ENCODE measurements at regions of chr20 and their contacts with region 1.

Region 1: DNA sequence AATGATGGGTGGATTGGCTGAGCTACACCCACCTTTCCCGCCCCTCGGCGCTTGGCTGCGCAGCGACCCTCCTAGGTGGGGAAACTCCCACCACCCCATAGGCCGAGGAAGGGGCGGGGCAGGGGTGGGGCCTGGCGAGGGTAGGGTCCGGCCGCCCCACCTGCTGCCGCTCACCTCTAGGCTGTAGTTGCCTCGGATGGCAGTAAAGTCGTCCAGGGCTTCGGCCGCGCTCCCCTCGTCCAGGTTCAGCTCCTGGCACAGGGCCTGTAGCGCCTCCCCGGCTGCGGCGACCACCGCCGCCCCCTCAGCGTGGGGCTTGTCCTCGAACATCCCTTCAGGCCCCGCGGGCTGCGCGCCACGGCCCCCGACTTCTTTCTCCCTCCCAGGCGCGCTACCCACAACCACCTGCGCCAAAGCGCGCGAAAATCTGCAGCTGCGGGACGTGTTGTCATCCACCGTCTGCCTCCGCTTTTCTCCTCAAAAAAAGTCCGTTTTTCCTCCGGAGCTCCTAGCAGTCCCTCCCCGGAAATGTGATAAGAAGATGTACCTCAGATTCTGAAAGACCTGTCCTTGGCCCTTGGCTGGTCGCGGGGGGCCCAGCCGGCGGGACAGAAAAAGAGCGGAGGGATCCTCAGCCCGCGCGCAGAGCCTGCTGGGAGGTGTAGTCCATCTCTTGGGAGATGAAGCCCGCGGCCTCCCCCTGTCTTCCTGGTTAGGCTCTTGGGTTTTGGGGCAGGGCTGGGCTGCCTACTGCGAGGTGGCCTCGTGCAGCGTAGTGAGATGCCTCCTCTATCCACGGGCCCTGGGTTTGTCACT is at the start of gene RBL1:
- DNase-seq: peak; percentile 77 to 91 (median 85)
- H3K4me3 ChIP-seq: peak within 1 kb of the TSS; percentile 70 to 100 (median 92)
- H3K27ac ChIP-seq: peak within 1 kb of the TSS in 56 of 59 donors; percentile 1 to 89 (median 70)
- H3K27me3 ChIP-seq: no peaks in the 10 kb centered on the region
- CTCF ChIP-seq: peak; percentile 25 to 83 (median 60)
- total RNA-seq, gene RBL1: 3.8 to 16.4 (median 7.5) TPM

Region 2: GRCh38 chr20:36951198-36951976 is 144.4 kb before region 1 on chr20 and contains the start of gene SAMHD1:
- intact Hi-C with region 1: loop called in 1 of 2 experiments (anchors 10 kb)
- DNase-seq: peak; percentile 95 to 98 (median 96)
- H3K4me3 ChIP-seq: peak within 1 kb of the TSS; percentile 74 to 99 (median 95)
- H3K27ac ChIP-seq: peak within 1 kb of the TSS; percentile 30 to 94 (median 84)
- H3K27me3 ChIP-seq: no peaks in the 10 kb centered on the region
- CTCF ChIP-seq: peak in 42 of 56 donors; percentile 7 to 62 (median 32)
- total RNA-seq, gene SAMHD1: 27.8 to 103 (median 50.8) TPM

Region 3: DNA sequence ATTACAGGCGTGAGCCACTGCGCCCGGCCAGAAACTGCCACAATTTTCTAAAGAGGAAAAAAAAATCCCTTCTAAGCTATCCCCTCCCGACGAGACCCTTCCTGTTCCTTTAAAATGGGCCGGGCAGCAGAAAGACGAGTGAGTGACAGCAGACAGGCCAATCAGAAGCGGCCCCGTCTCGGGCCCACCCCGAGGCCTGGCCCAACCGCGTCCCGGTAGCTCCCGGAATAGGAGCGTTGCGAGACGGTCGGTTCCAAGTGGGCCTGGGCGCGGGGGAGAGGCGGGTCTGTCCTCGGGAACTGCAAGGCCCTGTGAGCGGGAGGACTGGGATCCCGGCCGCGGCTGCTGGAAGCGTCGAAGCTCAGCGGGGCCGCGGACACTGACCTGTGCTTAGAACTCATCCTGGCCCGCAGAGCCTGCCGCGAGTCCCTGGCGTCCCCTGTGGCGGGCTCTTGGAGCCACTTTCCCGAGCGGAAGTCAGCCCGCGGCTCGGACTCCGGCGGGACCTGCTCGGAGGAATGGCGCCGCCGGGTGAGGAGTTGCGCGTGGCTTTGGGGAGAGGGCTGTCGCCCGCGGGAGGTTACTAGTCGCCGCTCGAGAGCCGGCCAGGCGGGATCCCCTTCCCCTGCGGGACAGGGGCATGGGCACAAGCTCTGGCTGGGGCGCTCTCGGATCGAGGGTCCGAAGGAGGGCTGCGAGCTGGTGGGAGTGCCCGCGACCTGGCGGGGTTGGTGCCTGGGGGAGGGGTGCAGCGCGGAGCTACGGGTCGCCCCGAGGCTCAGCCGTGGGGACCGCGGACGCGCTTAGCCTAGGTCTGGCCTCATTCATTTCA is 83.2 kb after region 1 on chr20 and contains the starts of genes MROH8 and RPN2:
- intact Hi-C with region 1: loop called (anchors 1 to 10 kb)
- DNase-seq: peak; percentile 98 to 99 (median 99)
- H3K4me3 ChIP-seq: peak within 1 kb of the TSS; percentile 67 to 97 (median 87)
- H3K27ac ChIP-seq: peak within 1 kb of the TSS; percentile 40 to 100 (median 98)
- H3K27me3 ChIP-seq: no peaks in the 10 kb centered on the region
- CTCF ChIP-seq: peak in 23 of 56 donors; percentile 9 to 49 (median 25)
- total RNA-seq, gene MROH8: 4.9 to 20.6 (median 11.6) TPM
- total RNA-seq, gene RPN2: 51.0 to 98.1 (median 63.8) TPM

Measured in dorsolateral prefrontal cortex (tissue), 120 donors.